SK-N-SH (cell line): ENCODE measurements at regions of chr2 and their contacts with region 1.

Region 1: GRCh38 chr2:219402665-219403515 is 15.2 kb upstream of the DNPEP start:
- DNase-seq: peak; percentile 87
- H3K4me3 ChIP-seq: no peak overlapping the region; a peak in 1 of 4 replicates
- H3K27ac ChIP-seq: no peak overlapping the region
- H3K4me1 ChIP-seq: peaks cover 20 to 22% of the 10 kb centered on the region in 2 experiments; a peak in 3 of 4 replicates
- H3K27me3 ChIP-seq: no peaks in the 10 kb centered on the region
- CTCF ChIP-seq: peak; percentile 97
- EP300 ChIP-seq: no peak
- RAD21 ChIP-seq: peak; percentile 96

Region 2: GRCh38 chr2:219362524-219363164 is 40.2 kb before region 1 on chr2:
- CTCF ChIA-PET with region 1: no interaction called
- POLR2A ChIA-PET with region 1: no interaction called
- DNase-seq: no peak
- H3K4me3 ChIP-seq: no peak overlapping the region
- H3K27ac ChIP-seq: peak overlapping the region in 1 of 2 experiments; percentile 55; a peak in 2 of 4 replicates
- H3K4me1 ChIP-seq: peaks cover 4 to 9% of the 10 kb centered on the region in 2 experiments; a peak in 2 of 4 replicates
- H3K27me3 ChIP-seq: peaks cover 18% of the 10 kb centered on the region
- CTCF ChIP-seq: no peak
- EP300 ChIP-seq: peak in 1 of 2 experiments; percentile 55; a peak in 1 of 4 replicates
- RAD21 ChIP-seq: no peak

Region 3: GRCh38 chr2:219430633-219431615 is 28.0 kb after region 1 on chr2:
- CTCF ChIA-PET with region 1: interaction called, 36 read pairs
- POLR2A ChIA-PET with region 1: no interaction called
- DNase-seq: peak; percentile 89
- H3K4me3 ChIP-seq: no peak overlapping the region
- H3K27ac ChIP-seq: peak overlapping the region in 1 of 2 experiments; percentile 77; a peak in 2 of 4 replicates
- H3K4me1 ChIP-seq: peaks cover 0 to 13% of the 10 kb centered on the region in 2 experiments; a peak in 1 of 4 replicates
- H3K27me3 ChIP-seq: no peaks in the 10 kb centered on the region
- CTCF ChIP-seq: peak; percentile 50
- EP300 ChIP-seq: 0 out of 4 replicates have a peak, but pooled peaks of 1 of the 2 experiments have one; percentile 10
- RAD21 ChIP-seq: peak; percentile 85

Region 4: GRCh38 chr2:219469186-219469724 is 66.4 kb after region 1 on chr2:
- CTCF ChIA-PET with region 1: interaction called, 73 read pairs
- POLR2A ChIA-PET with region 1: interaction called, 3 read pairs
- DNase-seq: no peak
- H3K4me3 ChIP-seq: no peak overlapping the region
- H3K27ac ChIP-seq: peak overlapping the region in 1 of 2 experiments; percentile 41; a peak in 2 of 4 replicates
- H3K4me1 ChIP-seq: peaks cover 12 to 26% of the 10 kb centered on the region in 2 experiments; a peak in 3 of 4 replicates
- H3K27me3 ChIP-seq: no peaks in the 10 kb centered on the region
- CTCF ChIP-seq: no peak
- EP300 ChIP-seq: no peak; a peak in 1 of 4 replicates
- RAD21 ChIP-seq: no peak

Region 5: GRCh38 chr2:219498280-219499057 is 95.6 kb after region 1 on chr2 and contains the start of gene GMPPA:
- CTCF ChIA-PET with region 1: interaction called, 26 read pairs
- POLR2A ChIA-PET with region 1: no interaction called
- DNase-seq: peak; percentile 93
- H3K4me3 ChIP-seq: peak within 1 kb of the TSS; percentile 81 to 85
- H3K27ac ChIP-seq: peak within 1 kb of the TSS; percentile 81 to 99
- H3K4me1 ChIP-seq: peaks cover 16 to 68% of the 10 kb centered on the region in 2 experiments
- H3K27me3 ChIP-seq: no peaks in the 10 kb centered on the region
- CTCF ChIP-seq: no peak; the same call in 1 of the 2 replicates
- EP300 ChIP-seq: no peak
- RAD21 ChIP-seq: no peak
- polyA plus RNA-seq, gene GMPPA: 61.3 and 75.1 TPM in 2 replicates

Region 6: GRCh38 chr2:219543601-219544358 is 140.9 kb after region 1 on chr2 and contains the starts of genes CHPF and TMEM198:
- CTCF ChIA-PET with region 1: interaction called, 39 read pairs
- POLR2A ChIA-PET with region 1: no interaction called
- DNase-seq: peak; percentile 100
- H3K4me3 ChIP-seq: peak within 1 kb of the TSS; percentile 62 to 86
- H3K27ac ChIP-seq: peak within 1 kb of the TSS; percentile 73 to 77
- H3K4me1 ChIP-seq: peaks cover 7 to 30% of the 10 kb centered on the region in 2 experiments; a peak in 2 of 4 replicates
- H3K27me3 ChIP-seq: no peaks in the 10 kb centered on the region
- CTCF ChIP-seq: no peak
- EP300 ChIP-seq: no peak
- RAD21 ChIP-seq: no peak
- polyA plus RNA-seq, gene CHPF: 119 and 141 TPM in 2 replicates
- polyA plus RNA-seq, gene TMEM198: 4.7 and 7.0 TPM in 2 replicates